Ascending aorta (tissue), 2 donors: ENCODE measurements at regions of chr4 and their contacts with region 1.

Region 1: GRCh38 chr4:47510506-47511143 is 25.6 kb downstream of the ATP10D start:
- DNase-seq: no peak
- H3K4me3 ChIP-seq: peak overlapping the region in 1 of 2 donors; percentile 13
- H3K27ac ChIP-seq: peak overlapping the region; percentile 72
- H3K4me1 ChIP-seq: peaks cover 0 to 16% of the 10 kb centered on the region in 2 donors
- H3K27me3 ChIP-seq: no peaks in the 10 kb centered on the region
- CTCF ChIP-seq: peak in 2 of 3 experiments; percentile 20 to 23

Region 2: DNA sequence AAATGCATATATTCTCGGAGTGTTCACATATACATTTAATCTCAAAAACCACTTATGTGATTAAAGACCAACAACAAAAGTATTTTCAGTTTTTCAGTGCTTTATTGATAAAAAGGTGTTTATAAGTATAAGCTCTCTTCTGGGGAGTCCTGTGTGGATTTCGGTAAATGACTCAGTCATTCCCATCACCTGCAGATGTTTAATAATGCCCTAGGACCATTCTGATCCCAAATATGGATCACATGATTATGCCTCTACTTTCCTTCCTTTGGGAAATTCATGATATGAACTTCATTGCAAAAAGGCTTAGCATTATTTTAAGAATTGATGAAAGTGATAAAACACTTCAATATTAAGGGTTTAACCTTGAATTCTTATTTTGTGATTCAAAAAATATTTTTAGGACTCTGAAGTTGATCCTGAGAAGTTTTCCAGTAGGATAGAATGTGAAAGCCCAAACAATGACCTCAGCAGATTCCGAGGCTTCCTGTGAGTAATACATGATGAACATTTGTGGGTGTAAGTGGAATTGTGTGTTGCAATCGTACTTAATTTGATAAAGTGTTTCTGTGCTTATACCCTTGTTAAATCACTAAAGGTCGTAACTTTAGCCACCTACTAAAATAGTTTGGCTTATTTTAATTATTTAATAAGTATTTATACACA is 14.7 kb after region 1 on chr4:
- intact Hi-C with region 1: loop called (anchors 2 kb)
- DNase-seq: peak in 1 of 2 donors; percentile 73
- H3K4me3 ChIP-seq: no peak overlapping the region
- H3K27ac ChIP-seq: peak overlapping the region; percentile 76 to 81
- H3K4me1 ChIP-seq: peaks cover 4 to 11% of the 10 kb centered on the region in 2 donors
- H3K27me3 ChIP-seq: no peaks in the 10 kb centered on the region
- CTCF ChIP-seq: no peak